Right cardiac atrium (tissue), 5 donors: ENCODE measurements at regions of chr1 and their contacts with region 1.

Region 1: DNA sequence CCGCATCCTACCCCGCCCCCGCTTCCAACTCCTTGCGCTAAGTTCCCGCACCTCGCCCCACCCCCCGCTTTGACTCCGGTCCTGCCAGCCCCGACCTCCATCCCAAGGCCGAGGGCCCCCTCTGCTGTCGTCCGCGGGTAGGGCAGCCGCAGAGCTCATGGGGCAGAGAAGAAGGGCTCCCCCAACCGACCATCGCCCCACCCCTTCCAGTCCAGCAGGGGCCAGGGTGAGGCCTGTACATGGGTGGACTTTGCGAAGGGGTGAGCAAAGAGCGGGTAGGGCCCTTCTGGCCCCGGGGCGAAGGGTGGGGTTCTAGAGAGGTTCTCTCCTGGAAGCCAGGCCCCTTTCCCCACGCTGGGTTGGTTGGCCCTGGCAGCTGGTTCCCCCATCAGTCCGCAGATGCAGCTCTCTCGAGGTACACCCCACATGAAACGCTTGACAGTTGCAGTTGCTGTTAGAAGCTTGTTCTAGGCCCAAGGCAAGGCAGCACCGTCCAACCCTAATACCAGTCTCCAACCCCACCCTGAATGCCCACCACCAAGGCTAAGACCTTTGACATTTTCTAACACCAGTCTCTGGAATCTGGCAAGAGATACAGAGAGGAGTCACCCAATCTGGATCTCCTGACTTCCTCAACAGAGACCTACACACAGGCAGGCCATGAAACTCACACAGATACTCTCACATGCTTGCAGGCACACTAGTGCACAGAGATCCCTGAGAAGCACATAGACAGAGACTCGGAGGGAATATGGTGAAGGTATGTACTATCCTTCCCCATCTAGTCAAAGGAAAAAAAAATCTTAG is 25.3 kb upstream of the ADGRB2 start:
- DNase-seq: peak; percentile 95 to 99 (median 99)
- ATAC-seq: peak; percentile 89 to 90
- H3K4me3 ChIP-seq: peak overlapping the region; percentile 60
- H3K27ac ChIP-seq: no peak overlapping the region
- H3K4me1 ChIP-seq: no peaks in the 10 kb centered on the region
- H3K27me3 ChIP-seq: no peaks in the 10 kb centered on the region

Region 2: DNA sequence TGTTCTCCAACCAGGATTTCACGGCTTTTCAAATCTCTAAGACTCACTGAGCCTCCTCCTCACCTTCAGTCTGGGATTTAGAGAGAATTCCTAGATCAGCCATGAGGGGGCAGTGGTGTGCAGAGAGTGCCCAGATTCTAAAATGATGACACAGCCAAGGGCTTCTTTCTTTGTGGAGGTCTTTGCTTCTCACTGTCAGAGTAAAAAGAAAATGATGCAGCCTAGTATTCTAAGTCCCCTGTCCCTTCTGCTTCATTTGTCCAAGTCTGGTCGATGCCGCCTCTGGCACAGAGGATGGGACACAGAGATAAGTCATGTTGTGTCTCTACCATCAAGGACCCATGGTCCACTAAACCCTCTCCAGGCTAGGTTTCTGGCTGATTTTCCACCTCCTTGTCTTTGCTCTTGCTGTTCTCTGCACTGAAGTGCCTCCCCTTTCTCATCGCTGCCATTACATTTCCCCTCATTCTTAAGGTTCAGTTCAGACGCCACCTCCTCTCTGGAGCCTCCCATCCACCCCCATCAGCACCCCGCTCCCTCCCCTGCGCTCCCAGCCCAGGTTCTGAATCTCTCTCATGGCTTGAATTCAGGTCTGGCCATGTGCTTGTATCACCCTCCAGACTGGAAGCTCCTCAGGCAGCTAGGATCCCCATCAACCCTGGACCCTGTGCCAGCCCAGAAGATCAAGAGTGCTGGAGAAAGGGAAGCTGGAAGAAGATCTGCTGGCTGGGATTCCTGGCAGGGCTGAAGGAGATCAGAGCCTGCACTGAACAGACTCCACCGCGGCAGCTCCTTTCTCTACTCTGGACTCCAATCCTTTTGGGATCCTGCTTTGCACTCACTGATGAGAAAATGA is 225.1 kb before region 1 on chr1:
- intact Hi-C with region 1: loop called in 3 of 4 experiments (anchors 10 kb)
- DNase-seq: no peak
- ATAC-seq: peak; percentile 58 to 78
- H3K4me3 ChIP-seq: no peak overlapping the region
- H3K27ac ChIP-seq: no peak overlapping the region
- H3K4me1 ChIP-seq: peaks cover 6% of the 10 kb centered on the region
- H3K27me3 ChIP-seq: no peaks in the 10 kb centered on the region

Region 3: GRCh38 chr1:31633053-31633452 is 156.4 kb before region 1 on chr1:
- intact Hi-C with region 1: no loop called
- DNase-seq: no peak
- ATAC-seq: no peak
- H3K4me3 ChIP-seq: no peak overlapping the region
- H3K27ac ChIP-seq: no peak overlapping the region
- H3K4me1 ChIP-seq: peaks cover 5% of the 10 kb centered on the region
- H3K27me3 ChIP-seq: no peaks in the 10 kb centered on the region

Region 4: GRCh38 chr1:31658721-31659120 is 130.7 kb before region 1 on chr1:
- intact Hi-C with region 1: loop called in 2 of 4 experiments (anchors 5 to 10 kb)
- DNase-seq: no peak
- ATAC-seq: no peak
- H3K4me3 ChIP-seq: no peak overlapping the region
- H3K27ac ChIP-seq: no peak overlapping the region
- H3K4me1 ChIP-seq: no peaks in the 10 kb centered on the region
- H3K27me3 ChIP-seq: no peaks in the 10 kb centered on the region

Region 5: GRCh38 chr1:31663622-31664452 is 125.6 kb before region 1 on chr1:
- intact Hi-C with region 1: loop called (anchors 2 to 10 kb)
- DNase-seq: peak; percentile 56 to 82 (median 81)
- ATAC-seq: peak; percentile 31 to 56
- H3K4me3 ChIP-seq: no peak overlapping the region
- H3K27ac ChIP-seq: no peak overlapping the region
- H3K4me1 ChIP-seq: peaks cover 6% of the 10 kb centered on the region
- H3K27me3 ChIP-seq: no peaks in the 10 kb centered on the region

Region 6: DNA sequence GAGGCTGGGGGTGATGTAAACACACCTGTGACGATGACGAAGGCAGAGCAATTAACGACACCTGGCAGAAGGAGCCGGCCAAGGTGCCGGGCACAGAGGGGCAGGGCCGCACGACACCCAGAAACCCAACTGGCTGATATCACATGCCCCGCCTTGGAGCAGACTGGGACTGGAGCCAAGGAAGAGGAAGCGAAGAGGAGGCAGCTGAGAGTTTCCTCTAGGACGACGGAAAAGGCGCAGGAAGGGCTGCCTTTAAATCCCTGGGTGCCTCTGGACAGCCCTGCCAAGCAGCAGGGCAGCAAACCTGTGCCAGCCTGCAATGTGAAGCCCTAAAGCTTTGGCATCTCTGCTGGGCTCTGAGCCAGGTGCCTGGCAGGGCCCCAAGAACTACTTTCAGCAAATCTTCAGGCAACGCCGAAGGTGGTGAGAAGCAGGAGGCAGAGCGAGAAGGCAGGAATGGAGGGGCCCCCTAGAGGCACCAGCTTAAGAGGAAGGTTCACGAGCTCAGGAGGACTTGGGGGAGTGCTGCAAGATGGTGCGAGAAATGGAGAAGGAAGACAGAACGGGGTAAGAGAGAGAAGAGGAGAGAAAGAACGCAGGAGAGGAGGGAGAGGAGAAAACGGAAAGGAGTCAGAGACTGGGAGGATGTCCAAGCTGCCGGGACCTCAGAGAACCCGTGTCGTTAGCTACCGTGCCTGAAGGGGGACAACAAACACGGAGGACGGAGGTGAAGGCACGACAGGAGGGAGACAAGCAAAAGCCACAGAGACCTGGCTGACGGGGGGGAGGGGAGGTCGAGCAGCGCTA is 119.5 kb before region 1 on chr1:
- intact Hi-C with region 1: loop called in 3 of 4 experiments (anchors 2 to 10 kb)
- DNase-seq: peak; percentile 77 to 90 (median 89)
- ATAC-seq: peak; percentile 54 to 63
- H3K4me3 ChIP-seq: peak overlapping the region; percentile 5
- H3K27ac ChIP-seq: peak overlapping the region; percentile 57
- H3K4me1 ChIP-seq: peaks cover 23% of the 10 kb centered on the region
- H3K27me3 ChIP-seq: no peaks in the 10 kb centered on the region

Region 7: GRCh38 chr1:31715087-31715872 is 74.2 kb before region 1 on chr1:
- intact Hi-C with region 1: loop called in 1 of 4 experiments (anchors 10 kb)
- DNase-seq: peak; percentile 97 to 99 (median 99)
- ATAC-seq: peak; percentile 96 to 97
- H3K4me3 ChIP-seq: peak overlapping the region; percentile 41
- H3K27ac ChIP-seq: peak overlapping the region; percentile 97
- H3K4me1 ChIP-seq: peaks cover 8% of the 10 kb centered on the region
- H3K27me3 ChIP-seq: no peaks in the 10 kb centered on the region